PC-9 (cell line): ENCODE measurements at regions of chr14 and their contacts with region 1.

Region 1: GRCh38 chr14:22614224-22614799 is 16.2 kb downstream of the ABHD4 start:
- DNase-seq: peak; percentile 76 to 97
- H3K4me3 ChIP-seq: peak overlapping the region; percentile 22; the same call in 1 of the 2 replicates
- H3K27ac ChIP-seq: peak overlapping the region; percentile 97
- H3K4me1 ChIP-seq: peaks cover 31% of the 10 kb centered on the region
- H3K27me3 ChIP-seq: no peaks in the 10 kb centered on the region
- CTCF ChIP-seq: no peak

Region 2: GRCh38 chr14:22598099-22598899 is 16.0 kb before region 1 on chr14 and contains the start of gene ABHD4:
- CTCF ChIA-PET with region 1: no interaction called
- POLR2A ChIA-PET with region 1: interaction called, 3 read pairs
- intact Hi-C with region 1: loop called (anchors 1 kb)
- DNase-seq: peak; percentile 46 to 67
- H3K4me3 ChIP-seq: peak within 1 kb of the TSS; percentile 93
- H3K27ac ChIP-seq: peak within 1 kb of the TSS; percentile 93
- H3K4me1 ChIP-seq: peaks cover 64% of the 10 kb centered on the region
- H3K27me3 ChIP-seq: no peaks in the 10 kb centered on the region
- CTCF ChIP-seq: no peak
- total RNA-seq, gene ABHD4: 62.1 and 83.2 TPM in 2 replicates

Region 3: DNA sequence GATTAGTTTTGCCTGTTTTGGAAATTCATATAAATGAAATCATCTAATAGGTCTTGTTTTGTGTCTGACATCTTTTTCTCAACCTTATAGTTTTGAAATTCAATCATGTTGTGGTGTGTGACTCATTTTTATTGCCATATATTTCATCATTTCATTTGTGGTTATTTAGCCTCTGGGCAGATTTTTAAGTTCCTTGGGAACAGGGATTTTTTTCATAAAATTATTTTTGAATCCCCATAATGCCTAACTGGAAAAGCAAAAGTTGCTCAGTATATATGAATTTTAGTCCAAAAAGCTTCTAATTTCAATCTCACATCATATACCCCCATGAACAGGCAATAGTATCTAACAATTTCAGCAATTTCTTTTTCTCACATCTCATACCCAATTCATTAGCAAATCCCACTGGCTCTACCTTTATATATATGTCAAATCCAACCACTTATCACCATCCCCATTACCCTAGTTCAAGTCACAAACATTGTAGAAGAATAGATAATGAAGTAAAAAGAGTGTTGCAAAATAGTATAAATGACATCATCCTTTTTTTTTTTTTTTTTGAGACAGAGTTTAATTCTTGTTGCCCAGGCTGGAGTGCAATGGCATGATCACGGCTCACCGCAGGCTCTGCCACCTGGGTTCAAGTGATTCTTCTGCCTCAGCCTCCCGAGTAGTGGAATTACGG is 32.4 kb after region 1 on chr14:
- CTCF ChIA-PET with region 1: no interaction called
- POLR2A ChIA-PET with region 1: no interaction called
- intact Hi-C with region 1: loop called (anchors 1 kb)
- DNase-seq: peak in 1 of 2 experiments; percentile 82
- H3K4me3 ChIP-seq: no peak overlapping the region; the same call in 1 of the 2 replicates
- H3K27ac ChIP-seq: peak overlapping the region; percentile 100
- H3K4me1 ChIP-seq: peaks cover 65% of the 10 kb centered on the region
- H3K27me3 ChIP-seq: no peaks in the 10 kb centered on the region
- CTCF ChIP-seq: no peak